OCI-LY7 (cell line): ENCODE measurements at regions of chr6 and their contacts with region 1.

Region 1: DNA sequence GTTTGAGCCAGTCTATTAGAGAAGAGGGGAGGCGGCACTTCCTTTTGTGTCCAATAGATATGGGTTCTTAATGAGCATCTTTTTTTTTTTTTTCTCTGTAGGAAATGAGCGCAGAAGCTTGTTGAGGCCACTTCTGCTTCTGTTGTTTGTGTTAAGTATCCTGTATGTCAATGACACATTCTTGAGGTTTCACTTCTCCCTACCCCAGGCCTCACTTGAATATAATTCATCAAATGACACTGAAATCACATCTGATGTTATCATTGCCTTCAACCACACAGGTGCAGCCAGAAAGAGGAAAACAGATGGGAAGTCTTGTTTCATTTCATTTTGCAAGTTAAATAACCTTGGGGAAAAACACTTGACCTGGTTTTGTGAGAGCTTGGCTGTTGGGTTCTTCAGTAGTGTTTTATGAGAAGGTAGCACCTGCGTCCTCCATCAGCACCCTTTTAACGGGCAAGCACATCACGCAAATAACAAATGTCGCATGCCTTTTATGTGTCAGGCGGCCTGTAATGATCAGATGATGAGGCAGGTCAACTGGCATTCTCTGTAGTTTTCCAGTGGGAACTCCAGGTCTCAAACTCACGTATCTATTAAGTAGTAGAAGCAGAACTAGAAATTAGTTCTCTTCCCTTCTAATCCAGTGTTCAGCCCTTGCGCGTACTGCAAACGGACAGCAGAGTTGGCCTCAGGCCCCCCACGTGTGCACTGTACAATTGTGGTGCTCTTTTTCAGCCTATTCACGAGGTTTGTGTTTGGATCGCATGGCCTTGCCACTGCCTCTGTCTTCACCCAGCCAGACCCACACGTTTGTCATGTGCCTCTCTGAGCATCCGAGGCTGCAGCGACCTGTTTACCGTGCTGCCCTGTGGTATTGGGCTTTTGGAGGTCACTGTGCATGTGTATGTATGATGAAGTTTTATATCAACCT is 23.5 kb downstream of the PLEKHG1 start:
- DNase-seq: peak; percentile 99
- H3K4me3 ChIP-seq: peak overlapping the region; percentile 57
- H3K27ac ChIP-seq: peak overlapping the region; percentile 99
- H3K4me1 ChIP-seq: peaks cover 94% of the 10 kb centered on the region
- CTCF ChIP-seq: no peak

Region 2: DNA sequence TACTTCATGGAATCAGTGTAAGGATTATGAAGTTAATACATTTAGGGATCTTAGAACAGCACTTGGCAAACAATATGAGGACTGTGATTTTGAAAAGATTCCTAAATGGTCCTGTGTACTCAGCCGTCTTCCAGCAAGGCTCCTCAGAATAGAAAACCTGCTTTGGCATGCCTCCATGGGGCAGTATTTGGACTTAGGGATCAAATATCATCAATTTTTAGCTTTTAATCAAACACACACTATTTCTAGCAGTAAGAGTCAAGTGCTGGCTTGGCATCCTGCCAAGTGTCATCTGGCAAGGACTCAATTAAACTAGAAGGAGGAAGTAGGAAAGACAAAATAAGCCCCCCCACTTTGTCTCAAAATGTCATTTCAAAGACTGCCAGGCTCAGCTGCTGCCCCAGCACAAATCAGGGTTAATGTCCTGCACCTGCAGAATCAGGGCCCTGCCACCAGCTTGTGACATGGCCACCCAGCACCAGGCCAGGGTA is 213.6 kb before region 1 on chr6:
- CTCF ChIA-PET with region 1: no interaction called
- POLR2A ChIA-PET with region 1: interaction called, 3 read pairs
- intact Hi-C with region 1: loop called (anchors 2 kb)
- DNase-seq: peak; percentile 94
- H3K4me3 ChIP-seq: peak overlapping the region; percentile 27
- H3K27ac ChIP-seq: peak overlapping the region; percentile 61
- H3K4me1 ChIP-seq: peaks cover 43% of the 10 kb centered on the region
- CTCF ChIP-seq: no peak

Region 3: GRCh38 chr6:150417899-150418826 is 205.0 kb before region 1 on chr6:
- CTCF ChIA-PET with region 1: no interaction called
- POLR2A ChIA-PET with region 1: interaction called, 3 read pairs
- intact Hi-C with region 1: loop called (anchors 2 kb)
- DNase-seq: peak; percentile 91
- H3K4me3 ChIP-seq: peak overlapping the region; percentile 3
- H3K27ac ChIP-seq: peak overlapping the region; percentile 9
- H3K4me1 ChIP-seq: peaks cover 14% of the 10 kb centered on the region
- CTCF ChIP-seq: peak; percentile 98

Region 4: GRCh38 chr6:150720774-150721233 is 97.6 kb after region 1 on chr6:
- CTCF ChIA-PET with region 1: no interaction called
- POLR2A ChIA-PET with region 1: interaction called, 3 read pairs
- intact Hi-C with region 1: loop called (anchors 5 kb)
- DNase-seq: peak; percentile 84
- H3K4me3 ChIP-seq: peak overlapping the region; percentile 53
- H3K27ac ChIP-seq: peak overlapping the region; percentile 54
- H3K4me1 ChIP-seq: peaks cover 66% of the 10 kb centered on the region
- CTCF ChIP-seq: 0 out of 2 replicates have a peak, but pooled peaks have one; percentile 34

Region 5: GRCh38 chr6:150767571-150768018 is 144.4 kb after region 1 on chr6:
- CTCF ChIA-PET with region 1: no interaction called
- POLR2A ChIA-PET with region 1: no interaction called
- intact Hi-C with region 1: loop called (anchors 2 kb)
- DNase-seq: no peak
- H3K4me3 ChIP-seq: no peak overlapping the region
- H3K27ac ChIP-seq: no peak overlapping the region
- H3K4me1 ChIP-seq: peaks cover 45% of the 10 kb centered on the region
- CTCF ChIP-seq: no peak